K562 (cell line): ENCODE measurements at regions of chr1 and their contacts with region 1.

Region 1: DNA sequence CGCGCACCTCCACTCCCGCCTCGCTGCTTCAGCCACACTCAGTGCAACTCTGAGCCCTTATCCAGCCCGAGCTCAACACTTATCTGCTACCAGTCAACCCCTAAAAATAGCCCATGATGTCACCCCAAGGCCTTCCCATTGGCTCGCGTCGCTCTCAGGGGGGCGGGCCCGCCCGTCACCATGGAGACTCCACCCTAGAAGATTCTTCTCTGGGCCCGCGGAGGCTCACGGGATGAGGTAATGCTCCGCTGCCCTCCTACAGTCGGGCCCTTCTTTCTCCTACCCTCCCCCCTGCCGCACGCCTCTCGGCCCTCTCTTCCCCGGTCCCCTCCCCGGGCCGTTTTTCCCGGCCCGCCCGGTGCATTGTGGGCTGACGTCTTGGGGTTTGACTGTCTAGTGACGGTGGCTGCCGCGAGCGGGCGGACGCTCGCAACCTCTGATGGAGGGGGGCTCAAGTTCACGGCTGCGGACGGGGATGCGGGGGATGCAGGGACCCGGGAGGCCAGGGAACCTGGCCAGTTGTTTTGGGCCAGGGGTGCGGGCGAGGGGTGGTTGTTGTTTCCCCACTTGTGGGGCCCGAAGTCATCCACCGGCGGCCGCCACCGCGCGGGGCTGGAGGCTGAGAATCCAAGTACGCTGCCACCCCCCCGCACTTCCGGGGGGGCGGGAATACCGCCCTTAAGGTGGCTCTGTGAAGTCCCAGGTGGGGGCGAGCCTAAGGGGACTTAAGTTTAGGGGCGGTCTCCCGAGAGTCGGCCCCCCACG is at the start of gene JUN:
- DNase-seq: peak; percentile 96 to 99 (median 98)
- ATAC-seq: peak; percentile 83
- H3K4me3 ChIP-seq: peak within 1 kb of the TSS; percentile 81
- H3K27ac ChIP-seq: peak within 1 kb of the TSS; percentile 96
- H3K4me1 ChIP-seq: peaks cover 9 to 37% of the 10 kb centered on the region in 2 experiments; a peak in 4 of 5 replicates
- H3K27me3 ChIP-seq: no peaks in the 10 kb centered on the region
- CTCF ChIP-seq: no peak; a peak in 1 of 6 replicates
- EP300 ChIP-seq: peak; percentile 39
- POLR2A ChIP-seq: peak; percentile 99
- RAD21 ChIP-seq: peak; percentile 17 to 29; a peak in 1 of 4 replicates
- polyA plus RNA-seq, gene JUN: 0.32 TPM

Region 2: DNA sequence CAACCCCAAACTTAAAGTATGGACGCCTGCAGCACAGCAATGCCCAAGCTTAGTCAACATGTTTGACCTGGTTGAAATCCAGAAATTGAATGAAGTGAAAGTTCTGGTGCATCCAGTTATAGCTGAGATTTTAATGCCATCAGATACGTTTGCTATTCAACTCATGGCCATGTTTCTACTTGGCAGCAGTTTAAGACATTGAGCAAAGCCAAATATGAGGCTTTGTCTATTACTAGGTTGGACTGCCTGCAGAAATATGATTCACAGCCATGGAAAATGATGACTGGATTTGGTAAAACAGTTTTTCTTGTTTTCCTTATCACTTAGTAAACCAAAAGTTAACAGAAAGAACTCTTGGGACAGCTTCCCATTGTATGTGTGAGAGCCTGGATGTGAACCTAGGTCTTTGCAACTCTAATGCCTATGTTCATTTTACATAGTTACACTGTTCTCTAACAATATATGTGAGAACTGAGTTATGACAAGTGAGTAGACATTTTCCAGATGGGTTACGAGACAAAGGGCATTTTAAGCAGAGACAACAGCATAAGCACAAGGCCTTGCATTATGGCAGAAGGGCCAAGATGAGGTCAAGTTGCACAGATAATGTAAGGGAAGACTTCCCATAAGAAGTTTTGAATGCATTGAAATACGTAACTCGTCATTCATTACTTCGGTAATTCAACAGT is 51.9 kb before region 1 on chr1:
- CTCF ChIA-PET with region 1: no interaction called
- POLR2A ChIA-PET with region 1: no interaction called
- in situ Hi-C with region 1: no loop called
- intact Hi-C with region 1: no loop called
- DNase-seq: no peak
- ATAC-seq: no peak
- H3K4me3 ChIP-seq: no peak overlapping the region
- H3K27ac ChIP-seq: no peak overlapping the region
- H3K4me1 ChIP-seq: no peaks in the 10 kb centered on the region
- H3K27me3 ChIP-seq: 0 out of 5 replicates have a peak, but pooled peaks cover 0 to 3% of the 10 kb centered on the region in 2 experiments
- CTCF ChIP-seq: no peak
- EP300 ChIP-seq: no peak
- POLR2A ChIP-seq: no peak
- RAD21 ChIP-seq: no peak

Region 3: GRCh38 chr1:58768971-58769808 is 15.0 kb before region 1 on chr1:
- CTCF ChIA-PET with region 1: no interaction called
- POLR2A ChIA-PET with region 1: interaction called, 18 read pairs
- in situ Hi-C with region 1: no loop called
- intact Hi-C with region 1: no loop called
- DNase-seq: peak; percentile 67 to 75 (median 74)
- ATAC-seq: peak; percentile 87
- H3K4me3 ChIP-seq: no peak overlapping the region
- H3K27ac ChIP-seq: no peak overlapping the region
- H3K4me1 ChIP-seq: no peaks in the 10 kb centered on the region
- H3K27me3 ChIP-seq: peaks cover 11 to 12% of the 10 kb centered on the region in 2 experiments; a peak in 4 of 5 replicates
- CTCF ChIP-seq: peak; percentile 77 to 86 (median 82)
- EP300 ChIP-seq: no peak
- POLR2A ChIP-seq: no peak
- RAD21 ChIP-seq: peak; percentile 78 to 80

Region 4: GRCh38 chr1:58883037-58883887 is 99.1 kb after region 1 on chr1:
- CTCF ChIA-PET with region 1: no interaction called
- POLR2A ChIA-PET with region 1: interaction called, 6 read pairs
- in situ Hi-C with region 1: loop called (anchors 10 kb)
- intact Hi-C with region 1: loop called (anchors 2 kb)
- DNase-seq: peak; percentile 41 to 89 (median 62)
- ATAC-seq: peak; percentile 63
- H3K4me3 ChIP-seq: no peak overlapping the region
- H3K27ac ChIP-seq: peak overlapping the region; percentile 97
- H3K4me1 ChIP-seq: peaks cover 47 to 64% of the 10 kb centered on the region in 2 experiments
- H3K27me3 ChIP-seq: no peaks in the 10 kb centered on the region
- CTCF ChIP-seq: no peak
- EP300 ChIP-seq: peak; percentile 86
- POLR2A ChIP-seq: 0 out of 2 replicates have a peak, but pooled peaks have one; percentile 39
- RAD21 ChIP-seq: peak in 1 of 2 experiments; percentile 17; a peak in 1 of 4 replicates

Region 5: GRCh38 chr1:59046730-59047157 is 262.6 kb after region 1 on chr1:
- CTCF ChIA-PET with region 1: no interaction called
- POLR2A ChIA-PET with region 1: interaction called, 5 read pairs
- in situ Hi-C with region 1: no loop called
- intact Hi-C with region 1: loop called (anchors 10 kb)
- DNase-seq: no peak
- ATAC-seq: no peak
- H3K4me3 ChIP-seq: no peak overlapping the region
- H3K27ac ChIP-seq: no peak overlapping the region
- H3K4me1 ChIP-seq: peaks cover 3 to 12% of the 10 kb centered on the region in 2 experiments; a peak in 4 of 5 replicates
- H3K27me3 ChIP-seq: peaks cover 0 to 5% of the 10 kb centered on the region in 2 experiments; a peak in 1 of 5 replicates
- CTCF ChIP-seq: no peak
- EP300 ChIP-seq: no peak
- POLR2A ChIP-seq: no peak
- RAD21 ChIP-seq: no peak

Region 6: GRCh38 chr1:59146651-59147358 is 362.6 kb after region 1 on chr1:
- CTCF ChIA-PET with region 1: no interaction called
- POLR2A ChIA-PET with region 1: no interaction called
- in situ Hi-C with region 1: no loop called
- intact Hi-C with region 1: loop called (anchors 10 kb)
- DNase-seq: no peak
- ATAC-seq: peak; percentile 62
- H3K4me3 ChIP-seq: no peak overlapping the region
- H3K27ac ChIP-seq: no peak overlapping the region
- H3K4me1 ChIP-seq: peaks cover 0 to 6% of the 10 kb centered on the region in 2 experiments; a peak in 2 of 5 replicates
- H3K27me3 ChIP-seq: peaks cover 0 to 10% of the 10 kb centered on the region in 2 experiments; a peak in 3 of 5 replicates
- CTCF ChIP-seq: no peak
- EP300 ChIP-seq: no peak
- POLR2A ChIP-seq: no peak
- RAD21 ChIP-seq: no peak

Region 7: DNA sequence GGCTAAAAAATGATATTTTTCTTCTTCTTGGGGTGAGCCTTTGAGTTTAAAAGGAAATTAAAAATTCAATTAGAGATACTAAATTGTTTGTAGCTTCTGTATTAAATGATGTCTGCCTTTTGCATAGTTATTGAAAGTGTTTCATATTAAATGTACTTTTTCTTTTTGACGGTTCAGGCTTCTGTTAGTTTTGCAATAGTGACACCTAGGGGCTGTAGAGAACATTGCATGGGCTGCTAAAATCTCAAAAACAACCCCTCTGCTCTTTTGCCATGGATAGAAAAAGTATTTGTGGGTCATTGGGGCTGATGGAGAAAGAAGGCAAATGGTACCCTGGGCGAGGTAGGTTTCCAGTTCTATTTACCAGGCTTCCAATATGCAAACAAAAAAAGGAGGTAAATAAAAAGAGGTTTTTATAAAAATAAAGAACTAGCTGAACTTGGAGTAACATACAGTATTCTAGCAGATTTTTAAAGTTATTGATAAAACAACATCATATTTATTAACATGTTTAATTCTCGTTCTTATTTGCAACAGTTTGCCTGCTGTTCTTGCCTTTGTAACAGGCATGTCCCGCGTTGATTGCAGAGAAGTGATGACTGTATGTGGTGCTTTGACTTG is 915.2 kb after region 1 on chr1:
- CTCF ChIA-PET with region 1: no interaction called
- POLR2A ChIA-PET with region 1: no interaction called
- in situ Hi-C with region 1: no loop called
- intact Hi-C with region 1: loop called (anchors 5 kb)
- DNase-seq: peak; percentile 45 to 58 (median 50)
- ATAC-seq: 0 out of 3 replicates have a peak, but pooled peaks have one; percentile 42
- H3K4me3 ChIP-seq: no peak overlapping the region
- H3K27ac ChIP-seq: no peak overlapping the region
- H3K4me1 ChIP-seq: no peaks in the 10 kb centered on the region
- H3K27me3 ChIP-seq: no peaks in the 10 kb centered on the region; a peak in 2 of 5 replicates
- CTCF ChIP-seq: peak; percentile 49 to 87 (median 78); a peak in 5 of 6 replicates
- EP300 ChIP-seq: no peak
- POLR2A ChIP-seq: no peak
- RAD21 ChIP-seq: peak; percentile 90 to 91